ENCODE measurements at regions of chr3 and their contacts with region 1.

Region 1: DNA sequence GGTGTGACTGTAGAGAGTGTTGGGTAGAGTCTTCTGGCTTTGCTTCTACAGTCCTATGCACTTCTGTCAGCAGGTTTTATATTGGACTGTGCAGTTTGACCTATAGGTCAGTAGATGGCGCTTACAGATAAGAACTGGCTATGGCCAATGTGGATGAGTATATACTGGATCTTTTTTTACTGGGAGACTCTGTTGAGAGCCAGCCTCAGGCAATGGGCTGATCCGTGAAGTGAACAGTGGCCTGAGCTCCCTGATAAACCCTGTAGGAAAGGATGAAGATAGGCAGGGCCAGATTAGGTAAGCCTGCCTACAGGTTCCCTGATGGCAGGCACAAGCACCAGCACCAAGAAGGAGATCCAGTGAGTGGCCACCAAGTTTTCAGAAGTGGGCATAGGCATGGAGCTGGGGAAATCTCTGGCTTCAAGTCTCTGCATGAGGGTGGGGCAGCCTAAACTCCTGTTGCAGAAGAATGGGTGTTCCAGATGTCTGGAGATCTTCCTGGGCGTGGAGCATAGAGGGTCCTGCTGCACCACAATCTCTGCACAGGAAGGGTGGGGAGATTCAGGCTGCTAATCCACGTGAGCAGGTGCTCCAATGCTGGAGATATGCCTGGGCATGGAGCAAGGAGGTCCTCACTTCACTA is 326.0 kb upstream of the SGO1 start:
- DNase-seq: peak; percentile 58
- ATAC-seq: peak; percentile 99
- H3K4me3 ChIP-seq: no peak overlapping the region
- H3K27ac ChIP-seq: no peak overlapping the region
- H3K4me1 ChIP-seq: no peaks in the 10 kb centered on the region
- H3K27me3 ChIP-seq: no peaks in the 10 kb centered on the region
- CTCF ChIP-seq: peak; percentile 83
- POLR2A ChIP-seq: no peak
- RAD21 ChIP-seq: peak; percentile 93

Region 2: GRCh38 chr3:20668411-20668810 is 156.4 kb after region 1 on chr3:
- CTCF ChIA-PET with region 1: no interaction called
- POLR2A ChIA-PET with region 1: no interaction called
- dilution Hi-C with region 1: no loop called
- in situ Hi-C with region 1: no loop called
- intact Hi-C with region 1: loop called (anchors 5 kb)
- DNase-seq: no peak
- ATAC-seq: no peak
- H3K4me3 ChIP-seq: no peak overlapping the region
- H3K27ac ChIP-seq: no peak overlapping the region
- H3K4me1 ChIP-seq: no peaks in the 10 kb centered on the region
- H3K27me3 ChIP-seq: no peaks in the 10 kb centered on the region
- CTCF ChIP-seq: no peak
- POLR2A ChIP-seq: no peak
- RAD21 ChIP-seq: no peak

Region 3: DNA sequence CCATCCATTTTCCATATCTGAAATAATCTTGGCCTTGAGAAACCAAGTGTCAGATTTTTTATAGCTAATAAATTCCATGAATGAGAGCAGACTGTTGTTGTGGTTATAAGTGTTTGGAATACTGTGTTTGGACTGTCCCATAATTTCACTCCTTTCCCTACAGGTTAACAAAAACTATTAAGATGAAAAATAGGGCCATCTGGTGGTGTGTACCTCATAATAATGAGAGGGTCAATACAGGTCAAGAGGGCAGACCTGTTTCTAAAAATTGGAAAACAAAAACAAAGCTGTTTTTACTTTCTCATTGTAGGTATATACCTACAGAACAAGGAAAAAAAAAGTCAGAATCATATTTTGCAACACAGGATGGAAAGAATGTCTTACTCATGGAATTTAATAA is 227.8 kb after region 1 on chr3:
- CTCF ChIA-PET with region 1: no interaction called
- POLR2A ChIA-PET with region 1: no interaction called
- dilution Hi-C with region 1: no loop called
- in situ Hi-C with region 1: no loop called
- intact Hi-C with region 1: loop called (anchors 10 kb)
- DNase-seq: no peak
- ATAC-seq: no peak
- H3K4me3 ChIP-seq: no peak overlapping the region
- H3K27ac ChIP-seq: no peak overlapping the region
- H3K4me1 ChIP-seq: no peaks in the 10 kb centered on the region
- H3K27me3 ChIP-seq: no peaks in the 10 kb centered on the region
- CTCF ChIP-seq: no peak
- POLR2A ChIP-seq: no peak
- RAD21 ChIP-seq: no peak

Region 4: GRCh38 chr3:21484057-21484827 is 972.3 kb after region 1 on chr3:
- CTCF ChIA-PET with region 1: no interaction called
- POLR2A ChIA-PET with region 1: no interaction called
- dilution Hi-C with region 1: no loop called
- in situ Hi-C with region 1: loop called (anchors 10 kb)
- intact Hi-C with region 1: loop called (anchors 1 kb)
- DNase-seq: peak; percentile 62
- ATAC-seq: peak; percentile 92
- H3K4me3 ChIP-seq: no peak overlapping the region
- H3K27ac ChIP-seq: no peak overlapping the region
- H3K4me1 ChIP-seq: no peaks in the 10 kb centered on the region
- H3K27me3 ChIP-seq: no peaks in the 10 kb centered on the region
- CTCF ChIP-seq: peak; percentile 56
- POLR2A ChIP-seq: no peak
- RAD21 ChIP-seq: peak; percentile 71